Keratinocyte (primary cell): ENCODE measurements at regions of chr7 and their contacts with region 1.

Region 1: GRCh38 chr7:64359543-64359942 is 45.8 kb downstream of the ZNF736 start:
- DNase-seq: no peak
- H3K4me3 ChIP-seq: no peak overlapping the region
- H3K27ac ChIP-seq: no peak overlapping the region
- H3K4me1 ChIP-seq: no peaks in the 10 kb centered on the region
- H3K27me3 ChIP-seq: no peaks in the 10 kb centered on the region
- CTCF ChIP-seq: no peak

Region 2: DNA sequence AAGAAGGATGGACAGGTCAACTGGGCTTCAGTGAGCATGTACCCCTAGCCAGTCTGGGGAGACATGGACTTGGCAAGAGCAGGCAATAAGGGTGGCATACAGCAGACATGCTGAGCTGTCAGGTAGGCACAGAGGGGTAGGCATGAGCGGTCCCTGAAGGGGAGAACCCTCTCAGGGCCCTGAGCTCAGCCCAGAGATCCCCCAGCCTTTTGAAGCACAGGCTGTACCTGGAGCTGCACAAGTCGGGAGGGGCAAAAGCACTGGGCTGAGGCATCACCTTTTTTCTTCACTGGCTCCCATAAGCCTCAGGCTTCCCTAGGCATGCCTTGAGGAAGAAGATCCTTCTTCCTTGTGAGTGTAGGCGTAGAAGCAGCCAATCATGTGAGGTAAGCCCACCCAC is 272.0 kb before region 1 on chr7:
- dilution Hi-C with region 1: loop called (anchors 10 kb)
- DNase-seq: no peak
- H3K4me3 ChIP-seq: no peak overlapping the region
- H3K27ac ChIP-seq: no peak overlapping the region
- H3K4me1 ChIP-seq: no peaks in the 10 kb centered on the region
- H3K27me3 ChIP-seq: no peaks in the 10 kb centered on the region
- CTCF ChIP-seq: no peak

Region 3: GRCh38 chr7:64463636-64464378 is 104.3 kb after region 1 on chr7:
- dilution Hi-C with region 1: loop called (anchors 25 kb)
- DNase-seq: no peak
- H3K4me3 ChIP-seq: peak overlapping the region in 1 of 3 experiments; percentile 21
- H3K27ac ChIP-seq: no peak overlapping the region
- H3K4me1 ChIP-seq: no peaks in the 10 kb centered on the region
- H3K27me3 ChIP-seq: no peaks in the 10 kb centered on the region
- CTCF ChIP-seq: no peak

Region 4: DNA sequence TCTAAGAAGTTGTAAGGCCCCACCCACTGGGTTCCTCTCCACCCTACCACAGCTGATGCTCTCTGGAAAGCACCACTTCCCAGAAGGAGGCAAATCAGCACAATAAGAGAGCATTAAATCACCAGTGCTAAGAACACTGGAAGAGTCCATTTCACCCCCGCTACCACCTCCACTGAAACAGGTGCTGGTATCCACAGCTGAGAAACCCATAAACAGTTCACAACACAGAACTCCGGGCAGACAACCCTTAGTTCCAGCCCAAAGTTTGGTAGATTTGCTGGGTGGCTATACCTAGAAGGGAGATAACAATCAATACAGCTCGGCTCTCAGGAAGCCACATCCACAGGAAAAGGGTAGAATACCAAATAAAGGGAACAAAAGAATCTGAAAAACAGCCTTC is 169.2 kb after region 1 on chr7:
- dilution Hi-C with region 1: no loop called
- DNase-seq: no peak
- H3K4me3 ChIP-seq: no peak overlapping the region
- H3K27ac ChIP-seq: no peak overlapping the region
- H3K4me1 ChIP-seq: no peaks in the 10 kb centered on the region
- H3K27me3 ChIP-seq: no peaks in the 10 kb centered on the region
- CTCF ChIP-seq: no peak